ENCODE measurements at regions of chr9 and their contacts with region 1.

Region 1: GRCh38 chr9:96654443-96655197 is 497 bp downstream of the PRXL2C start:
- DNase-seq: peak; percentile 48 to 78 (median 75)
- H3K4me3 ChIP-seq: peak overlapping the region; percentile 45 to 80 (median 55)
- H3K4me3 Mint-ChIP-seq: peak overlapping the region; percentile 87 to 95
- H3K27ac ChIP-seq: peak overlapping the region; percentile 69 to 89
- H3K27ac Mint-ChIP-seq: peak overlapping the region; percentile 91 to 97 (median 95)
- H3K4me1 ChIP-seq: peaks cover 11% of the 10 kb centered on the region in 2 donors
- H3K4me1 Mint-ChIP-seq: peaks cover 15% of the 10 kb centered on the region
- H3K27me3 ChIP-seq: no peaks in the 10 kb centered on the region
- H3K27me3 Mint-ChIP-seq: peaks cover 0 to 4% (median 1%) of the 10 kb centered on the region in 3 donors
- CTCF ChIP-seq: no peak

Region 2: GRCh38 chr9:96449845-96450612 is 204.6 kb before region 1 on chr9 and contains the start of gene HABP4:
- intact Hi-C with region 1: loop called (anchors 5 to 10 kb)
- DNase-seq: peak; percentile 91 to 95 (median 91)
- H3K4me3 ChIP-seq: peak within 1 kb of the TSS; percentile 28 to 75 (median 50)
- H3K4me3 Mint-ChIP-seq: peak within 1 kb of the TSS; percentile 86 to 92
- H3K27ac ChIP-seq: no peak within 1 kb of the TSS
- H3K27ac Mint-ChIP-seq: peak within 1 kb of the TSS in 5 of 7 donors; percentile 8 to 91 (median 54)
- H3K4me1 ChIP-seq: peaks cover 14 to 20% of the 10 kb centered on the region in 2 donors
- H3K4me1 Mint-ChIP-seq: peaks cover 14% of the 10 kb centered on the region
- H3K27me3 ChIP-seq: peaks cover 31 to 45% of the 10 kb centered on the region in 2 donors
- H3K27me3 Mint-ChIP-seq: peaks cover 45 to 74% (median 59%) of the 10 kb centered on the region in 3 donors
- CTCF ChIP-seq: no peak
- polyA plus RNA-seq, gene HABP4: 0.54 to 0.97 (median 0.68) TPM

Region 3: GRCh38 chr9:96566498-96567207 is 88.0 kb before region 1 on chr9:
- intact Hi-C with region 1: loop called in 1 of 2 experiments (anchors 10 kb)
- DNase-seq: peak; percentile 62 to 86 (median 62)
- H3K4me3 ChIP-seq: peak overlapping the region; percentile 48 to 84 (median 75)
- H3K4me3 Mint-ChIP-seq: peak overlapping the region; percentile 82 to 92
- H3K27ac ChIP-seq: peak overlapping the region in 1 of 2 donors; percentile 47
- H3K27ac Mint-ChIP-seq: peak overlapping the region in 2 of 7 donors; percentile 46 to 56
- H3K4me1 ChIP-seq: peaks cover 13 to 17% of the 10 kb centered on the region in 2 donors
- H3K4me1 Mint-ChIP-seq: peaks cover 14% of the 10 kb centered on the region
- H3K27me3 ChIP-seq: peaks cover 14 to 35% of the 10 kb centered on the region in 2 donors
- H3K27me3 Mint-ChIP-seq: peaks cover 29 to 47% (median 36%) of the 10 kb centered on the region in 3 donors
- CTCF ChIP-seq: peak; percentile 74

Region 4: DNA sequence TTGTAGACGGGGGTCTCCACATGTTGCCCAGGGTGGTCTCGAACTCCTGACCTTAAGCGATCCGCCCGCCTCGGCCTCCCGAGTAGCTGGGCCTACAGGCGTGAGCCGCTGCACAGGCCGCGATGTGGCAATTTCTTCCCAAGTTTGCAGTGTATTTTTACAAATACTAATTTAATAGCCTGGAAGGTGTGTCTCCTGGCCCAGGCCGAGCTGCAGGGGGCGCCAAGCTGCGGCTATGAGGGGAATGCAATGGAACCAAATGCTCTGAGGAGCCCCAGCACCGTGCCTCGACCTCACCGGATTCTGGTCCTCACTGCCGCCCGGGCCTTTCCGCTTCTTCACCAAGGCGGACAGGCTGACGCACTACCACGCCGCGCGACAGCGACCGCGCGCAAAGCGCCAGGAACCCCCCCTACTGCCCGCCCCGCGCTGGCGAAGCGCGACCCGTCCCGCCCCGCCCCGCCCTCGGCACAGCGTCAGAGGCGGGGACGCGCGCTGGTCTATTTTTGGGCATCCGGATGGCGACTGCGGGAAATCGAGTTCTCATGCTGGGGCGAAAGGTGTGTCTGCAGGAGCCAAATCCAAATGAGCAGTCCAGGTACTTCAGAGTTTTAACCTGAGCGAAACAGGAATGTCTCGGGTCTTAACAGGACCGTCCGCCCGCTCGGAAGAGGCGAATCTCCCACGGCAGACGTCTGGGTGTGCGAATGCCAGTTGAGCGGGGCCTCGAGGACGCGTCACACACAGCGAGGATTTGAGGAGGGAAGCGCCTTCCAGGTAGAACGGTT is 32.1 kb after region 1 on chr9:
- intact Hi-C with region 1: no loop called
- DNase-seq: peak; percentile 44 to 62 (median 51)
- H3K4me3 ChIP-seq: peak overlapping the region; percentile 23 to 69 (median 33)
- H3K4me3 Mint-ChIP-seq: peak overlapping the region; percentile 81 to 93
- H3K27ac ChIP-seq: no peak overlapping the region
- H3K27ac Mint-ChIP-seq: peak overlapping the region in 5 of 7 donors; percentile 50 to 86 (median 64)
- H3K4me1 ChIP-seq: peaks cover 5 to 9% of the 10 kb centered on the region in 2 donors
- H3K4me1 Mint-ChIP-seq: peaks cover 4% of the 10 kb centered on the region
- H3K27me3 ChIP-seq: no peaks in the 10 kb centered on the region
- H3K27me3 Mint-ChIP-seq: peaks cover 2 to 13% (median 4%) of the 10 kb centered on the region in 3 donors
- CTCF ChIP-seq: peak; percentile 22

Measured in CD14-positive monocyte (primary cell).